Adrenal gland (tissue), 19 donors: ENCODE measurements at regions of chr16 and their contacts with region 1.

Region 1: DNA sequence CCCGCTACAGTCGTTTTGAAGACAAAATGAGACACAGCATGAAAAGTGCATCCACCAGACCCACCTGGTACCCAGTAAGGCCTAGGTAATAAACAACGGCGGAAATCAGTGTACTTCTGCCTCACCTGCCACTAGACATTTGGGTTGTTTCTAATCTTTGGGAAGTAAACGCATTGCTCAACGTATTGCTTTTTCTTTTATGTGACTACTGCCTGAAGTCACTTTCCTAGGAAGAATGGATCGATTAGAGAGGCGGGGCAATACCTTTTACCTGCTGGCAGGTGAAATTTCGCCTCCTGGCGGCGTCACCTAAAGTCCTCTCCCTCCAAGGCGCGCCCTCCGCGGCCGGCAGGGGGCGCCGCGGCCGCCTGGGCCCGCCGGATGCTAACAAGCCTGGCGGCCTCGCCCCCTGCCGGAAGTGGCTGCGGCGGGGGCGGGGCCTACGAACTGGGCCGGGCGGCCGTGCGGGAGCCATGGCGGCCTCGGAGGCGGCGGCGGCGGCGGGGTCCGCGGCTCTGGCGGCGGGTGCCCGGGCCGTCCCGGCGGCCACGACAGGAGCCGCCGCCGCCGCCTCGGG is at the start of gene ATMIN:
- DNase-seq: peak; percentile 78 to 90 (median 86)
- H3K4me3 ChIP-seq: peak within 1 kb of the TSS in 3 of 4 donors; percentile 19 to 98 (median 43)
- H3K27ac ChIP-seq: peak within 1 kb of the TSS in 3 of 5 donors; percentile 68 to 94 (median 78)
- H3K4me1 ChIP-seq: peaks cover 9 to 20% of the 10 kb centered on the region in 2 donors
- H3K27me3 ChIP-seq: no peaks in the 10 kb centered on the region
- CTCF ChIP-seq: peak; percentile 69 to 98 (median 94)
- POLR2A ChIP-seq: peak in 1 of 2 donors; percentile 28
- total RNA-seq, gene ATMIN: 25.8 to 46.4 (median 35.5) TPM

Region 2: GRCh38 chr16:80703131-80704071 is 332.1 kb before region 1 on chr16:
- intact Hi-C with region 1: no loop called
- DNase-seq: no peak
- H3K4me3 ChIP-seq: no peak overlapping the region
- H3K27ac ChIP-seq: no peak overlapping the region
- H3K4me1 ChIP-seq: no peaks in the 10 kb centered on the region
- H3K27me3 ChIP-seq: no peaks in the 10 kb centered on the region
- CTCF ChIP-seq: no peak
- POLR2A ChIP-seq: no peak

Region 3: DNA sequence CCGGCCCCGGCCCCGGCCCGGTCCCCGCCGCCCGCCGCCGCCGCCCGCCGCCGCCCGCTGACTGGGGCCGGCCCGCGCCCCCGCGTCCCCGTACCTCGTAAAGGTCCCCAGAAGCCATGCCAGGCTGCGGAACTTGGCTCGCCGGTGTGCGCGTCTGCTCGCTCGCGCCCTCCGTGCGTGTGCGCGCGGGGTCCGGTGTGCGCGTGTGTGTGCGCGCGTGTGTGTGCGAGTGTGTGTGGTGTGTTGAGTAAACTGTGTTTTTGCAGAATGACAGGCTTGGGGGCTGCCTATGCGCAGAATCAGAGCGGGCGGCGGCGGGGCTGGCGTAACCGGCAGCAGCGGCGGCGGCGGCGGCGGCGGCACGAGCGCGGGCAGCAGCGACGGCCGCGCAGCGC is 231.4 kb before region 1 on chr16:
- intact Hi-C with region 1: no loop called
- DNase-seq: peak; percentile 46 to 64 (median 57)
- H3K4me3 ChIP-seq: peak overlapping the region in 2 of 4 donors; percentile 40 to 94
- H3K27ac ChIP-seq: peak overlapping the region in 1 of 5 donors; percentile 83
- H3K4me1 ChIP-seq: no peaks in the 10 kb centered on the region
- H3K27me3 ChIP-seq: no peaks in the 10 kb centered on the region
- CTCF ChIP-seq: no peak
- POLR2A ChIP-seq: peak in 1 of 2 donors; percentile 27

Region 4: DNA sequence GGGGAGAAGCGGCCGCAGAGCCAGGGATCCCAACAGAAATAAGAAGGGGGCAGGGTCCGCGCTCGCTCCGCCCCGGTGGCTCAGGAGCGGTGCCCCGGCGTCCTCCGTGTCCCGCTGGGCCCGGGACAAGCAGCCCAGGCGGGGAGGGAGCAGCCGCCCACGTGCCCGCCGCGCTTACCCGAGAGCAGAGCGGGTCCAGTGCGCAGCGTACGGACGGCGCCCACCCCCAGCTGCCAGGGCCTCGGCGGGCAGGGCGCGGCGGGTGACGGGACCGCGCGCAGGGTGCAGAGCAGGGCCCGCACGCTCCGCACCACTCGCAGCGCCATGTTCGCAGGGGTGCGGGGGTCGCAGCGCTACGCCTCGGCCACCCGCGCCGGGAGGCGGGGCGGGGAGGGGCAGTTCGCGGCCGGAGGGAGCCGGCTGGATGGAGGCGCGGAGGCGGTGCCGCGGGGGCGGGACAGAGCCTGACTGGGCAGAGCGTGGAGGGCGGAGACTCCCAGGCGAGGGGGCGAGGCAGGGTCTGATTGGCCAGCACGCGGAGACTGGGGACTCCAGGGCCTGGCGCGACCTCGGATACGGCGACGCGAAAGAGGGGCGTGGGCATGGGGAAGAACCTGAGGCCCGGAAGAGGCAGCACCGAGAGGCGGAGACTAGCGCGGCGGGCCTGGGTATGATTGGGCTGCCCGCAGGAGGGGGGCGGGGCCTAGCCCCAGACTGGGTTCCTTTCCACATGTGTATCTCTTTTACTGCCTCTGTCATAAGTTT is 60.6 kb after region 1 on chr16 and contains the start of gene GCSH:
- intact Hi-C with region 1: loop called in 1 of 2 experiments (anchors 10 kb)
- DNase-seq: peak; percentile 99 to 100 (median 99)
- H3K4me3 ChIP-seq: peak within 1 kb of the TSS; percentile 3 to 65 (median 40)
- H3K27ac ChIP-seq: peak within 1 kb of the TSS in 4 of 5 donors; percentile 46 to 83 (median 82)
- H3K4me1 ChIP-seq: peaks cover 4% of the 10 kb centered on the region in 2 donors
- H3K27me3 ChIP-seq: no peaks in the 10 kb centered on the region
- CTCF ChIP-seq: no peak
- POLR2A ChIP-seq: no peak
- total RNA-seq, gene GCSH: 10.3 to 32.2 (median 23.7) TPM

Region 5: DNA sequence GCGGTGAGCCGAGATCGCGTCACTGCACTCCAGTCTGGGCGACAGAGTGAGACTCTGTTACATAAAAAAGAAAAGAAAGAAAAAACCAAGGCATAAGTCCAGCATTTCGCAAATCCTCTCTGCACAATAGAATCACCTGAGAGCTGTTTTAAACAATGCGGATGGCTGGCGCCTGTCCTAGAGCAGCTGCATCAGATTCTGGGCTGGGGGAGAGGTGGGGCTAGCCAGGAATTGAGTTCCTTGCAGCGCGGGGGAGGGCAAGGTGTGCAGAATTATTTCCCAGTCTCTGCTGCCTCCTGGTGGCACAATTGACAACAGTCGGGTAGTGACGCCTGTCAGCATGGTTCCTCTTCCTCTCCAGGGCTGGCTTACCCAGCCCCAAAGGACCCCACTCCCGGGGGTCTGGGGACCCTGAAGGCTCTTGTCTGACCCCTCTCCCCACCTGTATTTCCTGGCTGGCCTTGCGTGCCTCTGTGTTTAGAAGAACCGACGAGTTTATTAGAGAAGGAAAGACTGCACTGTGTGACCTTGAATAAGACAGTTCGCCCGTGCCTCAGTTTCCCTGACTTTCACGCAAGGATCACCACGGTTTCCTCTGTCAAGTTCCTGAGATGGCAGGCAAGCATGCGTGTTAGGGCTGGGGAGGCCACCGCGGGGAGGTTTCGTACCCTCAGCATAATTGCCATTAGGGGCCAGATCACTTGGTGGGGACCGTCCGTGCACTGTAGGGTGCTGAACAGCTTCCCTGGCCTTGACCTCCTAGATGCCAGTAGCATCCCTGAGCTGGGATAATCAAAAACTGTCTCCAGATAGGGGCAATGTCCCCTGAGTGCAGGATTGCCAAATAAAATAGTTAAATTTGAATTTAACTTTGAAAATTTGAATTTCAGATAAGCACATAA is 702.6 kb after region 1 on chr16:
- intact Hi-C with region 1: loop called (anchors 5 kb)
- DNase-seq: peak; percentile 80 to 93 (median 87)
- H3K4me3 ChIP-seq: peak overlapping the region in 1 of 4 donors; percentile 41
- H3K27ac ChIP-seq: no peak overlapping the region
- H3K4me1 ChIP-seq: peaks cover 5 to 10% of the 10 kb centered on the region in 2 donors
- H3K27me3 ChIP-seq: no peaks in the 10 kb centered on the region
- CTCF ChIP-seq: peak; percentile 71 to 97 (median 92)
- POLR2A ChIP-seq: no peak